A549 (cell line): ENCODE measurements at regions of chr12 and their contacts with region 1.

Region 1: GRCh38 chr12:6335451-6336078 is 6.3 kb downstream of the TNFRSF1A start:
- DNase-seq: peak; percentile 86 to 88
- ATAC-seq: peak; percentile 40 to 43
- H3K4me3 ChIP-seq: peak overlapping the region; percentile 26
- H3K27ac ChIP-seq: peak overlapping the region; percentile 95 to 98
- H3K4me1 ChIP-seq: peaks cover 80% of the 10 kb centered on the region
- CTCF ChIP-seq: peak; percentile 47
- EP300 ChIP-seq: no peak
- POLR2A ChIP-seq: peak; percentile 26
- RAD21 ChIP-seq: peak; percentile 58 to 66; a peak in 4 of 5 replicates

Region 2: DNA sequence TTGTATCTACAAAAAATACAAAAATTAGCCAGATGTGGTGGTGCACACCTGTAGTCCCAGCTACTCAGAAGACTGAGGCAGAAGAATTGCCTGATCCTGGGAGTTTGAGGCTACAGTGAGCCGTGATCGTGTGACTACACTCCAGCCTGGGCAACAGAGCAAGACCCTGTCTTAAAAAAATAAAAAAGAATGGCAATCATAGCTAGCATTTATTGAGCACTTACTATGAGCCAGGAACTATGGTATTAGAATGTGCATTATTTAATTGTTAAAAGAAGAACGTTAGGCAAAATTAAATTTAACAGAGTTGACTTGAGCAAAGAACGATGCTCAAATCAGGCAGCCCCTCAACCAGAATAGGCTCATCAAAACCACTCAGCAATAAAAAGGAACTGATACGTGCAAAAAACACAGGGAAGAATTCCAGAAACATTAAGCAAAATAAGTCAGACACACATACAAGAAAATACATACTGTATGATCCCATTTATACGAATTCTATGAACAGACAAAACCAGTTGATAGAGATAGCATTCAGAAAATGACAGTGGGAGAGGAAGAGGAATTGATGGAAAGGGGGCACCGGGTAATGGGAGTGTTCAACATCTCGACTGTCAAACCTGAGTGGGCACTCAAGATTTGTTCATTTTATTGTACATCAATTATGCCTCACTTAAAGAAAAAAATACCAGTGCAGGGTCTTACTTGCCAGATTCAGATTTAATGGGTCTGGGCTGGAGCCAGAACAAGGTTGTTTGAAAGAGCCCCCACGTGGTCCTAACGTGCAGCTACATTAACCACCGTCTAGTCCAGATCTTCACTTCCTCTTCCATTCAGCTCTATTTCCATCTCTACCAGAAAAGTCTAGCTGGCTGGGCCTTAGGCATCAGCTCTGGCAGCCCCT is 31.8 kb after region 1 on chr12:
- CTCF ChIA-PET with region 1: interaction called, 705 read pairs
- POLR2A ChIA-PET with region 1: interaction called, 141 read pairs
- DNase-seq: peak in 1 of 2 experiments; percentile 77
- ATAC-seq: no peak
- H3K4me3 ChIP-seq: no peak overlapping the region
- H3K27ac ChIP-seq: peak overlapping the region; percentile 97 to 99
- H3K4me1 ChIP-seq: peaks cover 64% of the 10 kb centered on the region
- CTCF ChIP-seq: no peak; the same call in 1 of the 3 replicates
- EP300 ChIP-seq: no peak
- POLR2A ChIP-seq: no peak
- RAD21 ChIP-seq: peak; percentile 48 to 57; a peak in 4 of 5 replicates

Region 3: DNA sequence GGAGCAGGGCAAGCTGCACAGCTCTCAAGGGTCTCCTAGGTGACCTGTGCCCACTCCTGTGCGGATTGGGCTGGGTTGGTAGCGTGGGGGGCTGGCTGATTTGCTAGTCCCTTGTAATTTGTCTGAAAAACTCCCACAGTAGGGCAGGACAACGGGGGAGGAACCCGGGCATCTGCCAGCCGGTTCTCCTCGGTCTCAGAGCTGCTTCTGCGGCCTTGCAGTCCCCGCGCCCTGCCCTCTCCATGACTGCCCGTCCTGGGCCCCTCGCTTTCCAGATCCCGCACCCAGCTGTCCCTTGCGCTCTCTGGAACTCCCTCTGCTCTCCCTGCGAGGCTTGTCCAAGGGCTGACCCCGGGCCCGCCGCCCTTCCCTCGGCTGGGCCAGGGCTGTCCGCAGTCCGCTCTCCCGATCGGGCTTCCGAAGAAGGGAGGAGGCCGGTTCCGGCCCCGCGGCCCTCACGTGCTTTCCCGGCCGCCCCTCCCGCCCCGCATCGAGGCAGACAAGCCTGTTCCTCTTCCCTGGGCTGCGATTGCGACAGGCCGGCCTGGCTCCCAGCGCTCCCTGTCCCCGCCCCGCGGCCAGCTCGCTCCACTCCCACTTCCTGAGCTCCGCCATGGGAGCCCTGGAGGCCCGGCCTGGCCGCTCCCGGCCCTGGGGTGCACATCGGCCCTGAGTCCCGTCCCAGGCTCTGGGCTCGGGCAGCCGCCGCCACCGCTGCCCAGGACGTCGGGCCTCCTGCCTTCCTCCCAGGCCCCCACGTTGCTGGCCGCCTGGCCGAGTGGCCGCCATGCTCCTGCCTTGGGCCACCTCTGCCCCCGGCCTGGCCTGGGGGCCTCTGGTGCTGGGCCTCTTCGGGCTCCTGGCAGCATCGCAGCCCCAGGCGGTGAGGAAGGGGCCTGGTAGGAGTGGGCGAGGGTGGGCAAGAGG is 48.3 kb after region 1 on chr12 and contains the start of gene LTBR:
- CTCF ChIA-PET with region 1: interaction called, 705 read pairs
- POLR2A ChIA-PET with region 1: interaction called, 38 read pairs
- DNase-seq: peak; percentile 83 to 91
- ATAC-seq: peak; percentile 94 to 96
- H3K4me3 ChIP-seq: peak within 1 kb of the TSS; percentile 83
- H3K27ac ChIP-seq: peak within 1 kb of the TSS; percentile 99 to 100
- H3K4me1 ChIP-seq: peaks cover 42% of the 10 kb centered on the region
- CTCF ChIP-seq: no peak
- EP300 ChIP-seq: no peak
- POLR2A ChIP-seq: peak; percentile 66
- RAD21 ChIP-seq: peak in 1 of 2 experiments; percentile 55; a peak in 4 of 5 replicates
- polyA plus RNA-seq, gene LTBR: 57.3 and 63.9 TPM in 2 replicates

Region 4: DNA sequence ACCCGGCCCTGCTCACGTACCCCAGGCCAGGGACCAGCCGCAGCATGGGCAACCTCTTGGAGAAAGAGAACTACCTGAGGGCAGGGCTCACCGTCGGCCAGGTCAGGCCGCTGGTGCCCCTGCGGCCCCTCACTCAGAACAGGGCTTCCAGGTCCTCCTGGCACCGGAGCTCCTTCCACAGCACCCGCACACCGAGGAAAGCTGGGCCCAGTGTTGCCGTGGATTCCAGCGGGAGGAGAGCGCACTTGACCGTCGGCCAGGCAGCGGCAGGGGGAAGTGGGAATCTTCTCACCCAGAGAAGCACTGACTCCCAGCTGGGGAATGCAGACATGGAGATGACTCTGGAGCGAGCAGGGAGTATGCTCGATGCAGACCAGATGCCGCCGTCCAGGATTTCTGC is 142.9 kb after region 1 on chr12:
- CTCF ChIA-PET with region 1: no interaction called
- POLR2A ChIA-PET with region 1: no interaction called
- DNase-seq: no peak
- ATAC-seq: peak; percentile 18 to 19; a peak in 3 of 6 replicates
- H3K4me3 ChIP-seq: no peak overlapping the region
- H3K27ac ChIP-seq: no peak overlapping the region
- H3K4me1 ChIP-seq: no peaks in the 10 kb centered on the region
- CTCF ChIP-seq: no peak
- EP300 ChIP-seq: no peak
- POLR2A ChIP-seq: no peak
- RAD21 ChIP-seq: no peak

Region 5: DNA sequence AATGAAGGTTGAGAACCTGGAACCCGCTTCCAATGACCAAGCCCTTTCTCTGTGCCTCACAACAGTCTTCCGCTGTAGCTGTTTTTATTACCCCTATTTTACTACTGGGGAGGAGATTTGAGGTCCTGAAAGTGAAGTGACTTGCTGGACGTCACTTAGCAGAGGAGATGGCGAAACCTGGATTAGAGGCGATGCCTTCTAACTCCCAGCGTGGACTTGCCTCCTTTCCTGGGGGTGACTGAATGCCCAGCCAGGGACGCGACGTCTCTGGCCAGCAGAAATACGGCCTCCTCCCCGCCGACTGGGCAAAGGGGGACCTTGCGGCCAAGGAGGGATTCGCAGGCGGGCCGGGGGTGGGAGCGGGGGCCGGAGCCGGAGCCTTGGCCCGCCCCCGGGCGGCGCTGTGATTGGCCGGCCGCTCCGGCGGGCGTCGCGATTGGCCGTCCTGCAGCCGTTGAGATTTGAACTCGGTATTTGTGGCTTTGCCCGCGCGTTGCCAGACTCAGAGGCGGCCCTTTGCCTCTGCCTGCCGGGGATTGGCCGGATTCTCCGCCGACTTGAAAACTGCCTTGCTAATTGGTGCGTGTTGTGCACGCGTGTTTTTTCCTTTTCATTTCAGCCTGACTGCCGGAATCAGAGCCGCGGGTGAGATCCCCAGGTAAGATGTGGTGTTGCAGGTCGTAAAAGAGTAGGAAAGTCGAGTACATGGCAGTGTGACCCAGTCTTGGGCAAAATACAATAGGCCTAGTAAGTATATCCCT is 158.1 kb after region 1 on chr12 and contains the start of gene NCAPD2:
- CTCF ChIA-PET with region 1: no interaction called
- POLR2A ChIA-PET with region 1: interaction called, 11 read pairs
- DNase-seq: peak; percentile 90 to 98
- ATAC-seq: peak; percentile 94 to 95
- H3K4me3 ChIP-seq: peak within 1 kb of the TSS; percentile 80
- H3K27ac ChIP-seq: peak within 1 kb of the TSS; percentile 90 to 93
- H3K4me1 ChIP-seq: peaks cover 25% of the 10 kb centered on the region
- CTCF ChIP-seq: no peak
- EP300 ChIP-seq: no peak
- POLR2A ChIP-seq: peak; percentile 69
- RAD21 ChIP-seq: no peak
- polyA plus RNA-seq, gene NCAPD2: 130 and 145 TPM in 2 replicates

Region 6: DNA sequence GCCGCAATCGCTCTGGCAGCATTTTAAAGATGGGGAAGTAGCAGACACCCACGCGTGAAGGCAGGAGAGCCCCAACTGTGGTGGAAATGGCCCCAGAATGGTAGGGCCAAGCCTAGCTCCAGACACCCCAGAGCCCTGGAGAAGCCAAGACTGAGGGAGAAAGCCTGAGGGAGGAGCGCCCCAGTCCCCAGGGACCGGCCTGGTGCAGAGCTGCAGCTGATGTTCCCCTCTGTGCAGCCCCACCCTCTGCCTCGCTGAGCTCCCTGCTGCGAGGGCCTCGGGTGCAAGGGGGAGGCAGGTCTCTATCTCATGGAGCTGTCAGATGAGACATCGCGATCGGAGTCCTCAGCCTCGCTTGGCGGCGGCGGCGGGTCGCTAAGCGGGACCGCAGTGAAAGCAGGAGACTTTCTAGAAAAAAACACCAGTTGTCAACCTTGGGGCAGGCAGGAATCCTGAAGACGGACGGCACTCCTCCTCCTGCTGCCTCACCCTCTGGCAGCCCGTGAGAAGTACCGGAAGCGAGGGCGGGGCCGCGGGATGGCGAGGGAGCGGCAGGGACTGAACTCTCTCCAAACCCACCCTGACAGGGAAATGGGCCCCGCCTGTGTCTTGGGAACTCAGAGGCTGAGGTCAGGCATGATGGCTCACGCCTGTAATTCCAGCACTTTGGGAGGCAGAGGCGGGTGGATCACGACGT is 204.8 kb after region 1 on chr12:
- CTCF ChIA-PET with region 1: interaction called, 12 read pairs
- POLR2A ChIA-PET with region 1: interaction called, 25 read pairs
- DNase-seq: peak; percentile 87 to 91
- ATAC-seq: peak; percentile 58 to 69
- H3K4me3 ChIP-seq: peak overlapping the region; percentile 34
- H3K27ac ChIP-seq: peak overlapping the region; percentile 70 to 81
- H3K4me1 ChIP-seq: peaks cover 57% of the 10 kb centered on the region
- CTCF ChIP-seq: no peak
- EP300 ChIP-seq: no peak
- POLR2A ChIP-seq: no peak
- RAD21 ChIP-seq: no peak